ENCODE measurements at regions of chr18 and their contacts with region 1.

Region 1: GRCh38 chr18:5979971-5980457 is 84.7 kb upstream of the TMEM200C start:
- DNase-seq: no peak
- ATAC-seq: peak; percentile 77

Region 2: DNA sequence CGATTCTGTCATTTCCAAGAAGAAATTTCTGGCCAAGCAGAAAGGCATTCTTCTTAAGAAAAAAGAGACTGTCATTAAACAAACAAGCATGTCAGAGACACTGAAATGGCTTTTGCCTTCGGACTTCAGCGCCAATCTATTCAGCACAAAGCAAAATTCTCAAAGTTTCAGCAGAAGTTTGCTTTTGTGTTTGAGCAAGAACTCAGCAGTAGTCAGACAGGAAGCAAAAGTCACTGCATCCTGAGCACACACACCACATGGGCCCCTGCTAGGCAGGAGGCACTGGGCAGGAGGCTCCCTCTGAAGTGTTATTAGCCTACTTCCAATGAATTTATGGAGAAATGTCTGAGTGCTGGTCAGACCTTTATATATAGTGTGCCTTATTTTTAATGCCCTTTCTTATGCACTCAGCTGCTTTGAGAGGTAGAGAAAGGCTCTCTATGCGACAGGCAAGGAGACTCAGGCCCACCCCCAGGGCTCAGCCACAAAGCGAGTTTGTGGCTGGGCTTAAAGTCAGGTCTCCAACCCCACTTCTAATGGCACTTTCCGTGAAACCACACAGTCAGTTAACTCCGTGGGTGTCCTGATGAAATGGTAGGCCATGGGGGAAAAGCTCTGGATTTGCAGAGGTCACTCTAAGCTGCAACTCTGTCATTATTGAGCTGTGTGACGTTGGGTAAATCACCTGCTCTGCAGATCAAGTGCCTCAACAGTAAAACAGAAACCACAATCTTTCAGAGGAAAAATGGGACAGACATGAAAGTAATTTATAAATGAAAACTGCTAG is 76.3 kb after region 1 on chr18:
- intact Hi-C with region 1: loop called (anchors 5 kb)
- DNase-seq: no peak
- ATAC-seq: no peak

Region 3: DNA sequence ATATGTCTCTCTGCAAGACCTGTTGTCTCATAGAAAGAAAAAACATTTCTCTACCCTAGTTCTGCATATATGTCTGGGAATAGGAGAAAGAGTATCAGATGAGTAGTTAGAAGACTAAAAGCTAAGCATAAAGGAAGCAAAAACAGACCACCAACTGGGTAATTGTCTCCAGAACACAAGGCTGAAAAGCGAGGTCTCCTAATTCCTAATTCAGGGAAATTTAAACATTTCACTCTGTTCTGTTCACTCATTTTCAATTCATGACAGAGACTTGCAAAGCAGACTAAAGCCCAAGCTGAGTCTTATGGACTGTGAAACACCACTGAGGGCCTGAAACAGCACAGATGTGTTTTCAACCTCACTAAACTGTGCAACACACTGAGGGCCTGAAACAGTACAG is 139.7 kb after region 1 on chr18:
- intact Hi-C with region 1: no loop called
- DNase-seq: no peak
- ATAC-seq: peak; percentile 5

Region 4: GRCh38 chr18:6132751-6133368 is 152.8 kb after region 1 on chr18:
- intact Hi-C with region 1: loop called (anchors 5 kb)
- DNase-seq: no peak
- ATAC-seq: peak; percentile 97

Measured in Right ventricle myocardium inferior (tissue), 1 donor.